ENCODE measurements at regions of chr21 and their contacts with region 1.

Region 1: GRCh38 chr21:34630536-34631143 is 15.7 kb upstream of the RCAN1 start:
- DNase-seq: peak in 3 of 9 experiments; percentile 16 to 75 (median 68)
- ATAC-seq: peak; percentile 72
- H3K4me3 ChIP-seq: no peak overlapping the region
- H3K4me3 Mint-ChIP-seq: no peak overlapping the region
- H3K27ac ChIP-seq: no peak overlapping the region
- H3K27ac Mint-ChIP-seq: no peak overlapping the region
- H3K4me1 ChIP-seq: no peaks in the 10 kb centered on the region
- H3K4me1 Mint-ChIP-seq: no peaks in the 10 kb centered on the region
- H3K27me3 ChIP-seq: no peaks in the 10 kb centered on the region
- H3K27me3 Mint-ChIP-seq: peaks cover 16% of the 10 kb centered on the region
- CTCF ChIP-seq: peak; percentile 84

Region 2: DNA sequence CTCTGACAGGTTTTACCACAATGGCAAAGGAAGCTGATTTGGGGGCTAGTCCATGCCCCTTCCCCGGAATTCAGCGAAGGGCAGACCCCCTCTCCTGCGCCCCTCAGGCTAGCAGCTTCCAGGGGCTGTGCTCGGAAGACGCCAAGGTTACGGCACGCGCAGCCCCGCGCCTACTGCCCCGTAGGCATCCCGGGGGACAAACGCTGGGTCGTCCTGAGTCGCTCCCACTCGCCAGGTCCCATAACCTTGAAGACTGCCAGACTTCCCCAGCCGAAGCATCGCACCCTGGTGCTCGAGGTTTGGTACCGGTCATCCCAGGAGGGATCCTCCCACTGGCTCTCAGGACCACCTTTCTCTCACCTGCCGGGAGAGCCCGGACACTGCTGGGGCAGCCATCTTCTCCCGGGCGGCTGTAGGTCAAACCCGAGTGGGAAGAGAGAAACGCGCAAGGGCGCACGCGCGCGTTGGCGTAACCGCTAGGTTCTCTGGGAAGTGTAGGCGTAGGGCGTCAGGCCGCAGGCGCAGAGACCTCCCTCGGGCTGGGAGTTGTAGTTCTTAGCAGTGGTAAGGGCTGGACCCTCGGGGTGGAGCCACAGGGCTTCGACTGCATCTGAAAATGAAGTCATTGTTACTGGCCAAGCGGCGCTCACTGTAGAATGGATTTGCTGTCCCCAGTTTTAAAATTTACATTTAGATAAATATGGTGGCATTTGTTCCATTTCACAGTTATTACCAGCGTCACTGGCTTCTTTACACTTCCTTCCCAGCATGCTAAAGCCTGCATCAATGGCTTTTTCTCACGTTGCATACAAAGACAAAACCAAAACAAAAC is 715.1 kb before region 1 on chr21 and contains the start of gene ATP5PO:
- CTCF ChIA-PET with region 1: no interaction called
- POLR2A ChIA-PET with region 1: no interaction called
- intact Hi-C with region 1: loop called (anchors 5 kb)
- DNase-seq: peak; percentile 91 to 98 (median 96)
- ATAC-seq: peak; percentile 99
- H3K4me3 ChIP-seq: peak within 1 kb of the TSS; percentile 78 to 94
- H3K4me3 Mint-ChIP-seq: peak within 1 kb of the TSS; percentile 97
- H3K27ac ChIP-seq: peak within 1 kb of the TSS; percentile 74 to 82
- H3K27ac Mint-ChIP-seq: peak within 1 kb of the TSS; percentile 94
- H3K4me1 ChIP-seq: peaks cover 18% of the 10 kb centered on the region
- H3K4me1 Mint-ChIP-seq: peaks cover 30% of the 10 kb centered on the region
- H3K27me3 ChIP-seq: no peaks in the 10 kb centered on the region
- H3K27me3 Mint-ChIP-seq: no peaks in the 10 kb centered on the region
- CTCF ChIP-seq: no peak
- total RNA-seq, gene ATP5PO: 129 to 143 TPM

Region 3: GRCh38 chr21:34509151-34509550 is 121.5 kb before region 1 on chr21:
- CTCF ChIA-PET with region 1: interaction called, 15 read pairs
- POLR2A ChIA-PET with region 1: no interaction called
- intact Hi-C with region 1: no loop called
- DNase-seq: no peak
- ATAC-seq: no peak
- H3K4me3 ChIP-seq: no peak overlapping the region
- H3K4me3 Mint-ChIP-seq: no peak overlapping the region
- H3K27ac ChIP-seq: no peak overlapping the region
- H3K27ac Mint-ChIP-seq: no peak overlapping the region
- H3K4me1 ChIP-seq: no peaks in the 10 kb centered on the region
- H3K4me1 Mint-ChIP-seq: no peaks in the 10 kb centered on the region
- H3K27me3 ChIP-seq: no peaks in the 10 kb centered on the region
- H3K27me3 Mint-ChIP-seq: peaks cover 4% of the 10 kb centered on the region
- CTCF ChIP-seq: no peak

Region 4: GRCh38 chr21:34614633-34615486 is 15.8 kb before region 1 on chr21 and contains the start of gene RCAN1:
- CTCF ChIA-PET with region 1: interaction called, 16 read pairs
- POLR2A ChIA-PET with region 1: interaction called, 3 read pairs
- intact Hi-C with region 1: loop called in 1 of 2 experiments (anchors 1 kb)
- DNase-seq: peak; percentile 64 to 94 (median 85)
- ATAC-seq: peak; percentile 95
- H3K4me3 ChIP-seq: peak within 1 kb of the TSS; percentile 51 to 63
- H3K4me3 Mint-ChIP-seq: peak within 1 kb of the TSS; percentile 90
- H3K27ac ChIP-seq: peak within 1 kb of the TSS; percentile 41 to 68
- H3K27ac Mint-ChIP-seq: peak within 1 kb of the TSS; percentile 91
- H3K4me1 ChIP-seq: peaks cover 13% of the 10 kb centered on the region
- H3K4me1 Mint-ChIP-seq: peaks cover 21% of the 10 kb centered on the region
- H3K27me3 ChIP-seq: no peaks in the 10 kb centered on the region
- H3K27me3 Mint-ChIP-seq: no peaks in the 10 kb centered on the region
- CTCF ChIP-seq: no peak
- total RNA-seq, gene RCAN1: 0.73 to 1.0 TPM

Region 5: GRCh38 chr21:34653522-34653921 is 22.9 kb after region 1 on chr21:
- CTCF ChIA-PET with region 1: interaction called, 11 read pairs
- POLR2A ChIA-PET with region 1: no interaction called
- intact Hi-C with region 1: no loop called
- DNase-seq: no peak
- ATAC-seq: no peak
- H3K4me3 ChIP-seq: no peak overlapping the region
- H3K4me3 Mint-ChIP-seq: no peak overlapping the region
- H3K27ac ChIP-seq: no peak overlapping the region
- H3K27ac Mint-ChIP-seq: no peak overlapping the region
- H3K4me1 ChIP-seq: no peaks in the 10 kb centered on the region
- H3K4me1 Mint-ChIP-seq: no peaks in the 10 kb centered on the region
- H3K27me3 ChIP-seq: peaks cover 3 to 7% of the 10 kb centered on the region in 2 experiments
- H3K27me3 Mint-ChIP-seq: peaks cover 45% of the 10 kb centered on the region
- CTCF ChIP-seq: no peak

Region 6: DNA sequence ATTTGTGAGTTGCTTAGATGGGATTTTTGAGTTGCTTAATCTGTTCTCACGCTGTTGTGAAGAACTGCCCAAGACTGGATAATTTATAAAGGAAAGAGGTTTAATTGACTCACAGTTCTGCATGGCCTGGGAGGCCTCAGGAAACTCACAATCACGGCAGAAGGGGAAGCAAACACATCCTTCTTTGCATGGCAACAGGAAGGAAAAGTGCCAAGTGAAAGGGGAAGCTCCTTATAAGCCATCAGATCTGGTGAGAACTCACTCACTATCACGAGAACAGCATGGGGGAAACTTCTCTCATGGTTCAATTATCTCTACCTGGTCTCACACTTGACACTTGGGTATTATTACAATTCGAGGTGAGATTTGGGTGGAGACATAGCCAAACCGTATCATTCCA is 48.4 kb after region 1 on chr21:
- CTCF ChIA-PET with region 1: no interaction called
- POLR2A ChIA-PET with region 1: no interaction called
- intact Hi-C with region 1: no loop called
- DNase-seq: no peak
- ATAC-seq: no peak
- H3K4me3 ChIP-seq: no peak overlapping the region
- H3K4me3 Mint-ChIP-seq: no peak overlapping the region
- H3K27ac ChIP-seq: no peak overlapping the region
- H3K27ac Mint-ChIP-seq: no peak overlapping the region
- H3K4me1 ChIP-seq: no peaks in the 10 kb centered on the region
- H3K4me1 Mint-ChIP-seq: no peaks in the 10 kb centered on the region
- H3K27me3 ChIP-seq: no peaks in the 10 kb centered on the region
- H3K27me3 Mint-ChIP-seq: peaks cover 24% of the 10 kb centered on the region
- CTCF ChIP-seq: no peak

Region 7: DNA sequence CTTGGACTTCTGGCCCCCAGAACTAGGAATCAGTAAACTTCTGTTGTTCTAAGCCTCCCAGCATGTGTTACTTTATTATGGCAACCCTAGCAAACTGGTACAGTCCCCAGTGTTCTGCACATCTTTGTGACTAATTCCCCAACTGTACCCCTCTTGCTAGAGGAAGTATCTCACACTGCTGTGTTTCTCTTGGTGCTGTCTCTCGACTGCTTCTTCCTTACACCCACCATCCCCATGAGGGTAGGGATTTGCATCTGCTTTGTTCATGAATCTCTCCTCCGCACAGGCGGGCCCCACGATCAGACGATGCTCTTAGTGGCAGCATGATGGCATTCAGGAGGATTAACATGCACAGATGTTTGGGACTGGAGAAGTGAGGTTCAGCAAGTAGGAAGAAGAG is 84.9 kb after region 1 on chr21:
- CTCF ChIA-PET with region 1: no interaction called
- POLR2A ChIA-PET with region 1: no interaction called
- intact Hi-C with region 1: no loop called
- DNase-seq: no peak
- ATAC-seq: no peak
- H3K4me3 ChIP-seq: no peak overlapping the region
- H3K4me3 Mint-ChIP-seq: no peak overlapping the region
- H3K27ac ChIP-seq: no peak overlapping the region
- H3K27ac Mint-ChIP-seq: no peak overlapping the region
- H3K4me1 ChIP-seq: no peaks in the 10 kb centered on the region
- H3K4me1 Mint-ChIP-seq: no peaks in the 10 kb centered on the region
- H3K27me3 ChIP-seq: no peaks in the 10 kb centered on the region
- H3K27me3 Mint-ChIP-seq: peaks cover 11% of the 10 kb centered on the region
- CTCF ChIP-seq: no peak